Caco-2 (cell line): ENCODE measurements at regions of chr11 and their contacts with region 1.

Region 1: DNA sequence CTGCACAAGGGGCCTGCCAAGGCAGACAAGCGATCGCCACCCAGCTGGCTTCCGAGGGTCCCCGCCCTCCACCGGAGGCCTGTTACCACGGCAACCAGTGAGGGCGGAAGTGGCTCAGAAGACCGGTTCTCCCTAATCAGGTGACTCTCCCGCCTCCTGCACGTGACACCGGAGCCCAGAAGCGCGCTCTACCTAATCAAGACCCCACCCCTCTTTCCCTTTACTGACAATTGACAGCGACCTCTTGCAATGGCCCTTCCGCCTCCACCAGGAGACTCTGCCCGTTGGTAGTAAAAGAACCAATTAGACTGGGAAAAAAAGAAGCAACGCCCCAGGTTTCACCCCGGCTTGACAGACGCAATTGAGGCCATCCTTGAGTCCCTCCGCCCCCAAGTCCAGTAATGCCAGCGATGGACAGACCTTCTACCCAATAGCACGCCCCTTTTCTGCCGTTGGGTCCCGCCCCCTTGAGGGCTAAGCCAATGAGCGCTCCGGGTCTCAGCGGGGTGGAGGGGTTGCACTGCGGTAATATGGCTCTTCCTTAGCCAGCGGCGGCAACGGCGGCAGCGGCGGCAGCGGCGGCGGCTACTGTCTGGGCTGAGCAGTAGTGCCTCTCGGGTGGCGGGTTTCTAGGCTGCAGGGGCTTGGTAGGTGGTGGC is at the start of gene UVRAG:
- DNase-seq: peak; percentile 100
- H3K4me3 ChIP-seq: peak within 1 kb of the TSS; percentile 69
- H3K4me3 Mint-ChIP-seq: no peak within 1 kb of the TSS
- H3K27ac Mint-ChIP-seq: no peak within 1 kb of the TSS
- H3K4me1 ChIP-seq: peaks cover 10% of the 10 kb centered on the region
- H3K4me1 Mint-ChIP-seq: peaks cover 8% of the 10 kb centered on the region
- H3K27me3 ChIP-seq: no peaks in the 10 kb centered on the region
- H3K27me3 Mint-ChIP-seq: no peaks in the 10 kb centered on the region
- CTCF ChIP-seq: peak in 1 of 2 experiments; percentile 23
- total RNA-seq, gene UVRAG: 30.4 and 31.3 TPM in 2 replicates

Region 2: GRCh38 chr11:75786101-75786736 is 28.6 kb before region 1 on chr11:
- CTCF ChIA-PET with region 1: interaction called, 4 read pairs
- POLR2A ChIA-PET with region 1: interaction called, 13 read pairs
- intact Hi-C with region 1: no loop called
- DNase-seq: peak; percentile 97 to 98
- H3K4me3 ChIP-seq: no peak overlapping the region
- H3K4me3 Mint-ChIP-seq: peak overlapping the region; percentile 53
- H3K27ac Mint-ChIP-seq: peak overlapping the region; percentile 77
- H3K4me1 ChIP-seq: peaks cover 60% of the 10 kb centered on the region
- H3K4me1 Mint-ChIP-seq: peaks cover 57% of the 10 kb centered on the region
- H3K27me3 ChIP-seq: no peaks in the 10 kb centered on the region
- H3K27me3 Mint-ChIP-seq: no peaks in the 10 kb centered on the region
- CTCF ChIP-seq: no peak

Region 3: DNA sequence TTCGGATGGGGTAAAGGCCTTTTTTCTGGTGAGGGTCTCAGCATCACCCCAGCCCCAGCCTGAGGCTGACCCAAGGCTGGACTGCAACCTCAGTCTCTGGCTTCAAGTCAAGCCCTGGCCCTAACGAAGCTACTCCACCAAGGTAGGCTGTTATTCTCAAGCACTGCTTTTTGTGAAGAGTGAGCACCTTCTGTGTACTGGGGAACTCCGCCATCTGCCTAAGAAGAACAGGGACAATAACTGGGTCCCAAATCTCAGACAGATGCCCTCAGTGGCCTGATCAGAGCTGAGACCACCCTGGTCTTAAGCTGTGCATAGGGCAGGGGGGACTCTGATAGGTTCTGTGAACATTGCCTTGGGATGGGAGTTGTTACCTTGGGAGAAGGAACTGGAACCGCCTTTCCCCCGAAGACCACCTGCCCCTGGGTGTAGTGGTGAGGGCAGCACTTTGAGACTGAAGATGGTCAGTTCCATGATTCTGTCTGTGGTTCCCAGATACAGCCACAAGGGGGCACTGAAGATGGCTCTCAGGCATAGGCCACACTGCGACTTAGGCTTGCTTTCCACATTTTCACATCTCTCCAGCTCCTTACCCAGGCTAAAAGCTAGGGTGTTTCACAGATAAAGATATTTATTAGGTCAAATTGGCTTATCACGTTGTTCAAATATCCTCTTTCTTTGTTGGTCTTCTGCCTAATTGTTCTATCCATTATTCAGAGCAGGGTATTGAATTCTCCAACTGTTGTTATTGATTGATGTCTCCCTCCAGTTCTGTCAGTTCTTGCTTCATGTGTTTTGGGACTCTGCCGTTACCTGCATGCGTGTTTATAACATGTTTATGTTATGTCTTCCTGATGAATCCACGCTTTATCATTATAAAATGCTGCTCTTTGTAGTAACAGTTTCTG is 11.6 kb before region 1 on chr11:
- CTCF ChIA-PET with region 1: interaction called, 13 read pairs
- POLR2A ChIA-PET with region 1: no interaction called
- intact Hi-C with region 1: loop called (anchors 1 kb)
- DNase-seq: peak; percentile 79 to 89
- H3K4me3 ChIP-seq: no peak overlapping the region
- H3K4me3 Mint-ChIP-seq: no peak overlapping the region
- H3K27ac Mint-ChIP-seq: no peak overlapping the region
- H3K4me1 ChIP-seq: no peaks in the 10 kb centered on the region
- H3K4me1 Mint-ChIP-seq: no peaks in the 10 kb centered on the region
- H3K27me3 ChIP-seq: no peaks in the 10 kb centered on the region
- H3K27me3 Mint-ChIP-seq: no peaks in the 10 kb centered on the region
- CTCF ChIP-seq: peak; percentile 98

Region 4: DNA sequence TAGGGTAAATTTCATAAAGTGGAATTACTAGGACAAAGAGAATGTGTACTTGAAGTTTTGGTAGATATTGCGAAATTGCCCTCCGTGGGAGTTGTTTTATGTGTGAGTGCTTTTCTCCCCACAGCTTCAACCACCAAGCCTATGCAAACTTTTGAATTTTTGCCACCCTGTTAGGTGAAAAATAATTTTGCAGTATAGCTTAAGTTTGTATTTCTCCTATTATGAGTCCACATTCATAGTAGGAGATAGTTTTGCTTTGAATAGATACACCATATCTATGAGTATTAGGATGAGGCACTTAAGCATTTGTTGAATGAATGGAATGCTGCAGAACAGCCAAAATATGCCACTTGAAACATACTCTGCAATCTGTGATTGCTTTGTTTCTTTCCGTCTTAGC is 43.8 kb after region 1 on chr11:
- CTCF ChIA-PET with region 1: no interaction called
- POLR2A ChIA-PET with region 1: no interaction called
- intact Hi-C with region 1: loop called (anchors 2 kb)
- DNase-seq: peak in 1 of 2 experiments; percentile 23
- H3K4me3 ChIP-seq: no peak overlapping the region
- H3K4me3 Mint-ChIP-seq: no peak overlapping the region
- H3K27ac Mint-ChIP-seq: no peak overlapping the region
- H3K4me1 ChIP-seq: peaks cover 23% of the 10 kb centered on the region
- H3K4me1 Mint-ChIP-seq: peaks cover 18% of the 10 kb centered on the region
- H3K27me3 ChIP-seq: no peaks in the 10 kb centered on the region
- H3K27me3 Mint-ChIP-seq: no peaks in the 10 kb centered on the region
- CTCF ChIP-seq: no peak

Region 5: DNA sequence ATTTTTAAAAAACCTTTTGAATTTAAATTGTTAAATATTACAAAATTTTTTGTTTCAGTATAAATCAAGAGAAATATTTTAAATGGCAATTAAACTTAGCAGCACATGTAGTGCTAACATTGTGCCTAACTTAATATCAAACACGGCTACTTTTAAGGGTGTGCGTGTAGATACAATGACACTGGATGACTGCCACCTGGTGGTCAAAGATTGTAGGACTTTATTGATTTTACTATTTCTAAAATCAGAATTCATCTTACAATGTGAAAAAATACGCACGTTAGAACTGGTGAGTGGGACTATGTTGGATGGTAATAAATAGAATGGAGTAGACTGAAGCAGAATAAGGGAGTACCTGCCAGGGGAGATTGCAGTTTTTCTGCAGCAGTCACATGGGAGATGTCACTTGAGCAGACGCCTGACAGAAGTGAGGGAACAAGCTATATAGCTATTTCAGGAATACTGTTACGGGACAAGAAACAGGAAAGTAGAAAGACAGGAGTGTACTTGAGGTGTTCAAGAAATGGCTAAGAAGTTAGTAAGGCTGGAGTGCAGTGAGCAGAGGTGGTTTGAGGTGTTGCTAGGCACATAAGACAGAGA is 53.1 kb after region 1 on chr11:
- CTCF ChIA-PET with region 1: no interaction called
- POLR2A ChIA-PET with region 1: no interaction called
- intact Hi-C with region 1: loop called (anchors 2 kb)
- DNase-seq: peak in 1 of 2 experiments; percentile 73
- H3K4me3 ChIP-seq: no peak overlapping the region
- H3K4me3 Mint-ChIP-seq: no peak overlapping the region
- H3K27ac Mint-ChIP-seq: peak overlapping the region; percentile 30
- H3K4me1 ChIP-seq: peaks cover 14% of the 10 kb centered on the region
- H3K4me1 Mint-ChIP-seq: peaks cover 10% of the 10 kb centered on the region
- H3K27me3 ChIP-seq: no peaks in the 10 kb centered on the region
- H3K27me3 Mint-ChIP-seq: no peaks in the 10 kb centered on the region
- CTCF ChIP-seq: peak; percentile 89 to 90

Region 6: DNA sequence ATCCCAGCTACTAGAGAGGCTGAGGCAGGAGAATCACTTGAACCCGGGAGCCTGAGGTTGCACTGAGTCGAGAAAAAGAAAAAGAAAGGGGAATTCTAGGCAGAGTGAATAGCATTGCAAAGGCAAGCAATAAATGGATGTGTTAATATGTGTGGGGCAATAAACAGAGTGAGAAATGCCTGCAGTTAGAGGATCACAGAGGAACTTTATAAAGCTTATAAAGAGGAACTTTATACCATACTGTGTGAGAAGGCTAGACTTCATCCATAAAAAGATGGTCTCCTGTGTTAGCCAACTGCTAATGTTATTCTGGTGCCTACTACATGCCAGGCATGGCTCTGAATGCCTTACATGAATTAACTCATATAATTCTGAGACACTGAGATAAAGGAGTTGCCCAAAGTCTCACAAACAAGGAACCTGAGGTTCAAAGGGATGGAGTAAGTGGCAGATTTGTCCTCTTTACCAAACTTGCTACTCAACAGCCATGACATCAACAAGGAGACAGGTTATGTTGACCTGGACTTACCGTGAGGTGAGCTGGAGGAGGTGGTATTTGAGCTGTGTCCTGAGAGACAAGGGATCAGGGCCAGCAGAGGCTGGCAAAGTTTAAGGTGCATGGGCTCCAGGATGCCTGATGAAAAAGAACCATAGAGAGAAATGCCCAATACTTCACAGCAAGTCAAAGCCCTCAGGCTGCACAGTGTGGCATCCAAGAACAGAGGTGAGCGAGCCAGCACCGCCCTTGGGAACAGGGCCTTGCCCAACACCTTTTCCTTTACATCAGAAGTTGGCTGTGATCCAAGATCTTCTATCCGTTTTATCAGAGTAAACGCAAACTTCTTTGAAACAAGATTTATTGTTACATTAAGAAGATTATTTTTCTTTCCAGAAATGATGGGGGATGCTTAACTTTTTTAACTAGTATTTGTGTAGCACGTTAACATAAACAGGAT is 1220.5 kb after region 1 on chr11:
- CTCF ChIA-PET with region 1: no interaction called
- POLR2A ChIA-PET with region 1: no interaction called
- intact Hi-C with region 1: no loop called
- DNase-seq: peak in 1 of 2 experiments; percentile 46
- H3K4me3 ChIP-seq: no peak overlapping the region
- H3K4me3 Mint-ChIP-seq: peak overlapping the region; percentile 31
- H3K27ac Mint-ChIP-seq: no peak overlapping the region
- H3K4me1 ChIP-seq: peaks cover 28% of the 10 kb centered on the region
- H3K4me1 Mint-ChIP-seq: peaks cover 36% of the 10 kb centered on the region
- H3K27me3 ChIP-seq: no peaks in the 10 kb centered on the region
- H3K27me3 Mint-ChIP-seq: no peaks in the 10 kb centered on the region
- CTCF ChIP-seq: no peak